Caco-2 (cell line): ENCODE measurements at regions of chr5 and their contacts with region 1.

Region 1: GRCh38 chr5:78648359-78649210 is at the start of gene LHFPL2:
- DNase-seq: peak; percentile 74 to 83
- H3K4me3 ChIP-seq: peak within 1 kb of the TSS; percentile 76
- H3K4me3 Mint-ChIP-seq: peak within 1 kb of the TSS; percentile 97
- H3K27ac Mint-ChIP-seq: peak within 1 kb of the TSS; percentile 80
- H3K4me1 ChIP-seq: peaks cover 15% of the 10 kb centered on the region
- H3K4me1 Mint-ChIP-seq: peaks cover 20% of the 10 kb centered on the region
- H3K27me3 ChIP-seq: no peaks in the 10 kb centered on the region
- H3K27me3 Mint-ChIP-seq: no peaks in the 10 kb centered on the region
- CTCF ChIP-seq: no peak
- total RNA-seq, gene LHFPL2: 44.0 and 49.7 TPM in 2 replicates

Region 2: GRCh38 chr5:77449277-77449676 is 1199.3 kb before region 1 on chr5:
- CTCF ChIA-PET with region 1: no interaction called
- POLR2A ChIA-PET with region 1: no interaction called
- intact Hi-C with region 1: no loop called
- DNase-seq: no peak
- H3K4me3 ChIP-seq: no peak overlapping the region
- H3K4me3 Mint-ChIP-seq: no peak overlapping the region
- H3K27ac Mint-ChIP-seq: no peak overlapping the region
- H3K4me1 ChIP-seq: no peaks in the 10 kb centered on the region
- H3K4me1 Mint-ChIP-seq: no peaks in the 10 kb centered on the region
- H3K27me3 ChIP-seq: no peaks in the 10 kb centered on the region
- H3K27me3 Mint-ChIP-seq: no peaks in the 10 kb centered on the region
- CTCF ChIP-seq: no peak

Region 3: GRCh38 chr5:78320401-78320800 is 328.2 kb before region 1 on chr5:
- CTCF ChIA-PET with region 1: no interaction called
- POLR2A ChIA-PET with region 1: no interaction called
- intact Hi-C with region 1: loop called (anchors 10 kb)
- DNase-seq: peak in 1 of 2 experiments; percentile 13
- H3K4me3 ChIP-seq: no peak overlapping the region
- H3K4me3 Mint-ChIP-seq: no peak overlapping the region
- H3K27ac Mint-ChIP-seq: no peak overlapping the region
- H3K4me1 ChIP-seq: no peaks in the 10 kb centered on the region
- H3K4me1 Mint-ChIP-seq: no peaks in the 10 kb centered on the region
- H3K27me3 ChIP-seq: no peaks in the 10 kb centered on the region
- H3K27me3 Mint-ChIP-seq: no peaks in the 10 kb centered on the region
- CTCF ChIP-seq: peak; percentile 46 to 63

Region 4: GRCh38 chr5:78677777-78678668 is 29.4 kb after region 1 on chr5:
- CTCF ChIA-PET with region 1: no interaction called
- POLR2A ChIA-PET with region 1: no interaction called
- intact Hi-C with region 1: loop called (anchors 1 kb)
- DNase-seq: peak; percentile 76 to 83
- H3K4me3 ChIP-seq: no peak overlapping the region
- H3K4me3 Mint-ChIP-seq: peak overlapping the region; percentile 42
- H3K27ac Mint-ChIP-seq: peak overlapping the region; percentile 94
- H3K4me1 ChIP-seq: peaks cover 45% of the 10 kb centered on the region
- H3K4me1 Mint-ChIP-seq: peaks cover 30% of the 10 kb centered on the region
- H3K27me3 ChIP-seq: no peaks in the 10 kb centered on the region
- H3K27me3 Mint-ChIP-seq: no peaks in the 10 kb centered on the region
- CTCF ChIP-seq: no peak

Region 5: DNA sequence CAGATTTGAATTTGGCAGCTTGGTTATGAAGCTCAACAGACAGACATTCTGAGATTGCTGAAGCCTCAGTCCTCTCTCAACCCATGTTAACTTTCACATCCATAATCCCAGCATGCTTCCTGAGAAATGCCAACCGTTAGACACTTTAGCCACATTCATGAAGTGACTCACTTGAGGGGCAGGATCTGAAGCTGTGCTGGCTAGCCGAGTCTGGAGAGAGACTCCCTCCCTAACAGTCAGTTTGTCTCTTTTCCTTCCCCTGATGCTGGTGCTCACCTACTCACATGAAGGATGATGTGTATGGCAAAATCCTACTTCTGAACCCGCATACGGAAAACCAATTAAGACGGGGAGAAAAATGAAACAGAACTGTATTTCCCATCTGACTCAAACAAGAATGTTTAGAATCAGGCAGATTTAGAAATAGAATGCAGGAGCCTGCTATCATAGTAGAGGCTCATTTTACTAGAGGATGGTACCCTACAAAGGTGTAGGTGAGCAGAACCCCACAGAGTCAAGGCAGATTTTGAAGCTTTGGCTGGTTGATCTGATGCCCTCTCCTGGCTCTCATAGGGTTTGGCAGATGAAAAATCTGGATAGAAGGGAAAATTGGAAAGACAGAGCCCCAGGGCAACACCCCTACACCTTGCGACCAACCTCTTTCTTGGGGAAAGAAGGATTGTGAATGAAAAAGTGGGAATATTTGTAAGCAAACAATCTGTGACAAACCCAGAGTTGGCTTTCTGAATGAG is 150.9 kb after region 1 on chr5:
- CTCF ChIA-PET with region 1: no interaction called
- POLR2A ChIA-PET with region 1: no interaction called
- intact Hi-C with region 1: loop called (anchors 10 kb)
- DNase-seq: no peak
- H3K4me3 ChIP-seq: no peak overlapping the region
- H3K4me3 Mint-ChIP-seq: no peak overlapping the region
- H3K27ac Mint-ChIP-seq: no peak overlapping the region
- H3K4me1 ChIP-seq: peaks cover 18% of the 10 kb centered on the region
- H3K4me1 Mint-ChIP-seq: peaks cover 29% of the 10 kb centered on the region
- H3K27me3 ChIP-seq: no peaks in the 10 kb centered on the region
- H3K27me3 Mint-ChIP-seq: no peaks in the 10 kb centered on the region
- CTCF ChIP-seq: no peak

Region 6: DNA sequence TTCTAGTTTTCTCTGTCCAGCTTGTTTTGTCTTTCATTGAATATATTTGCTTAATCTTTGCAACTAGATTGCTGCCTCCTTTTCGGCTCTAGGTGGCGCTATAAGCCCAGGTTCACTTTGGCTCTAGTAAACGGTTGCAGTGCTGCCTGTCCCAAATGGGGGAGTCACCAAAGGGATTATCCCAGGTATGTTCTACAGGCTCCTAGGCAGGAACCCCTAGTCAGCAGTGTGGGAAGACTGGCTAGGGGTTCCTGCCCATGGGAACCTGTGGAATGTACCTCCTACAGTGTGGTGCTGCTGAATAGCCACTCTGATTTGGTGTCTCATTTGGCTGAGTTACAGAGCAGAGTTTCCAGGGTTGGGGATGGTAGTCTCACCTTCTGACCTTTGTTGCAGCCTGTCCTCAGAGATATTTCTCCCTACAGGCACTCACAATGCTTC is 251.4 kb after region 1 on chr5:
- CTCF ChIA-PET with region 1: no interaction called
- POLR2A ChIA-PET with region 1: no interaction called
- intact Hi-C with region 1: loop called (anchors 10 kb)
- DNase-seq: peak; percentile 71
- H3K4me3 ChIP-seq: no peak overlapping the region
- H3K4me3 Mint-ChIP-seq: no peak overlapping the region
- H3K27ac Mint-ChIP-seq: no peak overlapping the region
- H3K4me1 ChIP-seq: 0 out of 2 replicates have a peak, but pooled peaks cover 4% of the 10 kb centered on the region
- H3K4me1 Mint-ChIP-seq: no peaks in the 10 kb centered on the region
- H3K27me3 ChIP-seq: no peaks in the 10 kb centered on the region
- H3K27me3 Mint-ChIP-seq: no peaks in the 10 kb centered on the region
- CTCF ChIP-seq: peak; percentile 69 to 86